Astrocyte of the cerebellum (primary cell): ENCODE measurements at regions of chr3 and their contacts with region 1.

Region 1: DNA sequence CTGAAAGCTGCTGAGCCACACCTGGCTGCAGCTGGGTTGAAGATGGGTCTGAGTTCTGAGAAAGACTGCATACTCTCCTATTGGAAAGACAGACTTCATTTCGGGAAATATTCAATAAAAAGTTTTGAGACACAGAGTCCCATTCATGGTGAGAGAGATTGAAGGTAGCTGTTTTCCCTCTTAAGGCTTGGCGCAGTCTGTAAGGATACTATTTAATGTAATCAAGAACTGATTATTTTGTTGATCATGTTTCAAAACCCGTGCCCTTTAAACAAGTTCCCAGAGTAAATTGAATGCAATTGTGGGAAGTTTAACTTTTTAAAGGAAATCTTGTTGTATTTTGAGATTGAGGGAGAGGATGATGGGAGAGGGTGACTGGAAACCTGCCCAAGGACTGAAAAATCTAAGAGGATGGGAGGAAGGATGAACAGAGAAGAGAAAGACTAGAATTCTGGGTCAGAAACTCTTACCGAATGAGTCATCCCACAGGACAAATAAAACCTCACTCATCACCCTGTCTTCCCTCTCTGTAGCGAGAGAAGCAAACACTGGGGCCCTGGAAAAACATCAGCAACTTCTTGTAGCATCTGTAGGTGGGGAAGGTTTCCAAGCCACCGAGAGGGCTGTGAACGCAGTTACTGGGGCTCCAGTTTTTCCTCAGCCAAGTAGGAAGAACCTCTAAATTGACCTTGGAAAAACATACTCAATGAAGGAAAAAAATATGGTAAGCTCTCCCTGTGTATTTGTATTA is 193.2 kb upstream of the TPRG1 start:
- DNase-seq: peak; percentile 66
- H3K4me3 ChIP-seq: no peak overlapping the region
- CTCF ChIP-seq: no peak

Region 2: DNA sequence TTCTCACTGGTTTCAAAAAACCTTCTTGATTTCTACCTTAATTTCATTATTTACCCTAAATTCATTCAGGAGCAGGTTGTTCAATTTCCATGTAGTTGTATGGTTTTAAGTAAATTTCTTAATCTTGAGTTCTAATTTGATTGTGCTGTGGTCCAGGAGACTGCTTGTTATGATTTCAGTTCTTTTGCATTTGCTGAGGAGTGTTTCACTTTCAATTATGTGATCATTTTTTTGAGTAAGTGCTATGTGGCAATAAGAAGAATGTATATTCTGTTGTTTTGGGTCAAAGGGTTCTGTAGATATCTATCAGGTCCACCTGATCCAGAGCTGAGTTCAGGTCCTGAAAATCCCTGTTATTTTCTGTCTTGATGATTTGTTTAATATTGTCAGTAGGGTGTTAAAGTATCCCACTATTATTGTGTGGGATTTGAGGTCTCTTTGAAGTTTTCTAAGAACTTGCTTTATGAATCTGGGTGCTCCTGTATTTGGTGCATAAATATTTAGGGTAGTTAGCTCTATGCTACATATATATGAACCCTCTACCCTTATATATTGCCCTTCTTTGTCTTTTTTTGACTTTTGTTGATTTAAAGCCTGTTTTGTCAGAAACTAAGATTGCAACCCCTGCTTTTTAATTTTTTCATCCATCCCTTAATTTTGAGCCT is 34.8 kb after region 1 on chr3:
- in situ Hi-C with region 1: no loop called
- DNase-seq: no peak
- H3K4me3 ChIP-seq: no peak overlapping the region
- CTCF ChIP-seq: no peak

Region 3: GRCh38 chr3:189084620-189085019 is 106.0 kb after region 1 on chr3:
- in situ Hi-C with region 1: loop called (anchors 5 kb)
- DNase-seq: no peak
- H3K4me3 ChIP-seq: no peak overlapping the region
- CTCF ChIP-seq: no peak